ENCODE measurements at regions of chr4 and their contacts with region 1.

Region 1: GRCh38 chr4:106809076-106809475 is 227.0 kb downstream of the DKK2 start:
- DNase-seq: peak; percentile 19
- ATAC-seq: peak; percentile 89
- H3K4me3 ChIP-seq: no peak overlapping the region
- H3K27ac ChIP-seq: no peak overlapping the region
- H3K4me1 ChIP-seq: no peaks in the 10 kb centered on the region
- H3K27me3 ChIP-seq: no peaks in the 10 kb centered on the region
- CTCF ChIP-seq: peak; percentile 69
- EP300 ChIP-seq: no peak
- POLR2A ChIP-seq: no peak
- RAD21 ChIP-seq: no peak

Region 2: GRCh38 chr4:106369456-106370060 is 439.5 kb before region 1 on chr4:
- CTCF ChIA-PET with region 1: no interaction called
- POLR2A ChIA-PET with region 1: no interaction called
- in situ Hi-C with region 1: loop called (anchors 25 kb)
- intact Hi-C with region 1: loop called (anchors 5 kb)
- DNase-seq: peak; percentile 42
- ATAC-seq: peak; percentile 67
- H3K4me3 ChIP-seq: no peak overlapping the region
- H3K27ac ChIP-seq: no peak overlapping the region
- H3K4me1 ChIP-seq: peaks cover 17% of the 10 kb centered on the region
- H3K27me3 ChIP-seq: no peaks in the 10 kb centered on the region
- CTCF ChIP-seq: peak; percentile 73
- EP300 ChIP-seq: no peak
- POLR2A ChIP-seq: no peak
- RAD21 ChIP-seq: peak; percentile 67; the same call in 1 of the 2 replicates

Region 3: GRCh38 chr4:106691749-106692148 is 117.3 kb before region 1 on chr4:
- CTCF ChIA-PET with region 1: no interaction called
- POLR2A ChIA-PET with region 1: no interaction called
- in situ Hi-C with region 1: no loop called
- intact Hi-C with region 1: loop called (anchors 1 kb)
- DNase-seq: no peak
- ATAC-seq: peak; percentile 39; the same call in 1 of the 3 replicates
- H3K4me3 ChIP-seq: no peak overlapping the region
- H3K27ac ChIP-seq: no peak overlapping the region
- H3K4me1 ChIP-seq: no peaks in the 10 kb centered on the region
- H3K27me3 ChIP-seq: no peaks in the 10 kb centered on the region
- CTCF ChIP-seq: no peak
- EP300 ChIP-seq: no peak
- POLR2A ChIP-seq: no peak
- RAD21 ChIP-seq: no peak

Region 4: DNA sequence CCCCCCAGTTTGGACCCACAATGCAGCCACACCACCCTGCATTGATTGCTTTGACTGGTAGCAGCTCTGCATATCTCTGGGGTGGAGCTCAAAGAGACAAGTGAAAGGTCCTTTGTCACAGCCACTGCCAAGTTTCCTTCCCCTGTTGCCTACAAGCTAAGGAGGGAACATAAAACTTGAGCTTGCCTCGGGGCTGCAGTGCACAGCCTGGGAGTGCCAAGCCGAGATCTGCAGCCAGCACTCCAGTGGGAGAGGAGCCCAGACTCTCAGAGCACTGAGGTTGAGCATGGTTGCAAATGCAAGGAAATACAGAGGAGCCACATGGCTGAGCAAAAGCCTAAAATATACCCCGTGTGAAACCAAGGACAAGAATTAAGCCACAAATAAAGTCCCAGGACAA is 84.8 kb after region 1 on chr4:
- CTCF ChIA-PET with region 1: no interaction called
- POLR2A ChIA-PET with region 1: no interaction called
- in situ Hi-C with region 1: no loop called
- intact Hi-C with region 1: no loop called
- DNase-seq: no peak
- ATAC-seq: no peak
- H3K4me3 ChIP-seq: no peak overlapping the region
- H3K27ac ChIP-seq: no peak overlapping the region
- H3K4me1 ChIP-seq: no peaks in the 10 kb centered on the region
- H3K27me3 ChIP-seq: no peaks in the 10 kb centered on the region; a peak in 1 of 5 replicates
- CTCF ChIP-seq: no peak
- EP300 ChIP-seq: no peak
- POLR2A ChIP-seq: no peak
- RAD21 ChIP-seq: no peak

Measured in HepG2 (cell line).